ENCODE measurements at regions of chr11 and their contacts with region 1.

Region 1: DNA sequence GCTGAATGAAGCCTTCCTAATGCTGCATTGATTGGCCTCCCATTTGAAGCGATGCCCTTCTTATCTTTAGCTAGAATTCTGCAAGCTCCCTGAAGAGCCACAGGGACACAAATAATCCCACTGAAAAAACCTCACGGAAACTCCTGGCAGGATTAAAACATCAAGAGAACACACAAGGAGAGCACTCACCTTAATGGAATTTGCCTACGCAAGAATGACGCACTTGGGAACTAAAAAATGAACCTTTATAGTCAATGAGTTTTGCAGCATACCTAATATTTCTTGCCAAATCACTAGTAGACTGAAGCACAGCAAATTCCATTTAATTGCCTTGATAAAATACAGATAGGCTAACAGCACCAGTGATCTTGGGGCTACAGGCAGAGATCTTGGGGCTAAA is 232.8 kb upstream of the UBASH3B start:
- DNase-seq: peak; percentile 95
- H3K4me3 Mint-ChIP-seq: peak overlapping the region; percentile 76
- H3K27ac Mint-ChIP-seq: peak overlapping the region; percentile 97
- H3K4me1 Mint-ChIP-seq: peaks cover 42% of the 10 kb centered on the region
- H3K27me3 Mint-ChIP-seq: no peaks in the 10 kb centered on the region
- CTCF ChIP-seq: no peak

Region 2: GRCh38 chr11:122197055-122197987 is 225.4 kb before region 1 on chr11:
- CTCF ChIA-PET with region 1: no interaction called
- POLR2A ChIA-PET with region 1: no interaction called
- intact Hi-C with region 1: no loop called
- DNase-seq: peak; percentile 98
- H3K4me3 Mint-ChIP-seq: peak overlapping the region; percentile 12
- H3K27ac Mint-ChIP-seq: peak overlapping the region; percentile 49
- H3K4me1 Mint-ChIP-seq: peaks cover 46% of the 10 kb centered on the region
- H3K27me3 Mint-ChIP-seq: no peaks in the 10 kb centered on the region
- CTCF ChIP-seq: no peak

Region 3: GRCh38 chr11:122267602-122268001 is 155.1 kb before region 1 on chr11:
- CTCF ChIA-PET with region 1: no interaction called
- POLR2A ChIA-PET with region 1: no interaction called
- intact Hi-C with region 1: no loop called
- DNase-seq: peak; percentile 32
- H3K4me3 Mint-ChIP-seq: no peak overlapping the region
- H3K27ac Mint-ChIP-seq: no peak overlapping the region
- H3K4me1 Mint-ChIP-seq: peaks cover 7% of the 10 kb centered on the region
- H3K27me3 Mint-ChIP-seq: no peaks in the 10 kb centered on the region
- CTCF ChIP-seq: no peak

Region 4: GRCh38 chr11:122383186-122383585 is 39.5 kb before region 1 on chr11:
- CTCF ChIA-PET with region 1: no interaction called
- POLR2A ChIA-PET with region 1: no interaction called
- intact Hi-C with region 1: no loop called
- DNase-seq: peak; percentile 20
- H3K4me3 Mint-ChIP-seq: no peak overlapping the region
- H3K27ac Mint-ChIP-seq: no peak overlapping the region
- H3K4me1 Mint-ChIP-seq: no peaks in the 10 kb centered on the region
- H3K27me3 Mint-ChIP-seq: no peaks in the 10 kb centered on the region
- CTCF ChIP-seq: no peak

Region 5: GRCh38 chr11:122491509-122491908 is 68.8 kb after region 1 on chr11:
- CTCF ChIA-PET with region 1: no interaction called
- POLR2A ChIA-PET with region 1: interaction called, 14 read pairs
- intact Hi-C with region 1: no loop called
- DNase-seq: peak; percentile 60
- H3K4me3 Mint-ChIP-seq: no peak overlapping the region
- H3K27ac Mint-ChIP-seq: peak overlapping the region; percentile 1
- H3K4me1 Mint-ChIP-seq: peaks cover 24% of the 10 kb centered on the region
- H3K27me3 Mint-ChIP-seq: no peaks in the 10 kb centered on the region
- CTCF ChIP-seq: no peak